Ascending aorta (tissue), 2 donors: ENCODE measurements at regions of chr10 and their contacts with region 1.

Region 1: DNA sequence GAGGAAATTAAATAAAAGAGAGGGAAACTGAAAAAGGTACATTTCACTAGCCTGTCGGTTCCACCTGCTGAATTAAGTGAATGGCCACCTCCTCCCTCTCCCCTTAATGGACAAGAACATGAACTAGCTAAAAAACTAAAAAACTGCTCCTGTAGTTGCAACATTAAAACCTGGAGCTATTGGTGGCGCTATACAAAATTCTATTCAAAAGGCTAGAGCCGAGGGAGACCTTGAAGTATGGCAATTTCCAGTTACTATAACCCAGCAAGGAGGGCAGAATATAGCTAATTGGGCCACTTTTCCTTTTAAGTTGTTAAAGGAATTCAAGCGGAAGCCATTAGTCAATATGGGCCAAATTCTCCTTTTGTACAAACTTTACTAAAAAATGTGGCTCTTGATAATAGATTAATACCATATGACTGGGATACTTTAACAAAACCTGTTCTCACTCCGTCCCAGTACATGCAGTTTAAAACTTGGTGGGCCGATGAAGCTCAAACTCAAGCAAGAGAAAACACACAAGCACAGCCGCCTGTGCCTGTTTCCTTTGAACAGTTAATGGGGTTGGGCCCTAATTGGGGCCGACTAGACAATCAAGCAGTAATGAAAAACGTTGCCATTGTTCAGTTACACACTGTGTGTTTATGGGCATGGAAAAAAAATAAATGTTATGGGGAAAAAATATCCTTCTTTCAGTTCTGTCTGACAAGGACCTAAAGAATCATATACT is 6.5 kb upstream of the CHST3 start:
- DNase-seq: no peak
- H3K4me3 ChIP-seq: no peak overlapping the region
- H3K27ac ChIP-seq: no peak overlapping the region
- H3K4me1 ChIP-seq: peaks cover 0 to 3% of the 10 kb centered on the region in 2 donors
- H3K27me3 ChIP-seq: no peaks in the 10 kb centered on the region
- CTCF ChIP-seq: no peak

Region 2: GRCh38 chr10:72223743-72224101 is 266.0 kb after region 1 on chr10:
- intact Hi-C with region 1: loop called (anchors 2 kb)
- DNase-seq: peak in 1 of 2 donors; percentile 74
- H3K4me3 ChIP-seq: no peak overlapping the region
- H3K27ac ChIP-seq: peak overlapping the region; percentile 63 to 85
- H3K4me1 ChIP-seq: peaks cover 0 to 42% of the 10 kb centered on the region in 2 donors
- H3K27me3 ChIP-seq: no peaks in the 10 kb centered on the region
- CTCF ChIP-seq: no peak